Mammary epithelial cell (primary cell): ENCODE measurements at regions of chr1 and their contacts with region 1.

Region 1: GRCh38 chr1:178532392-178532791 is 19.5 kb downstream of the TEX35 start:
- DNase-seq: peak; percentile 58
- H3K4me3 ChIP-seq: no peak overlapping the region
- H3K27ac ChIP-seq: no peak overlapping the region
- H3K4me1 ChIP-seq: peaks cover 31% of the 10 kb centered on the region
- H3K27me3 ChIP-seq: no peaks in the 10 kb centered on the region
- CTCF ChIP-seq: peak; percentile 89 to 92

Region 2: GRCh38 chr1:178300352-178300699 is 232.1 kb before region 1 on chr1:
- CTCF ChIA-PET with region 1: no interaction called
- dilution Hi-C with region 1: no loop called
- in situ Hi-C with region 1: no loop called
- intact Hi-C with region 1: loop called (anchors 1 kb)
- DNase-seq: no peak
- H3K4me3 ChIP-seq: no peak overlapping the region
- H3K27ac ChIP-seq: peak overlapping the region; percentile 47
- H3K4me1 ChIP-seq: peaks cover 10% of the 10 kb centered on the region
- H3K27me3 ChIP-seq: no peaks in the 10 kb centered on the region
- CTCF ChIP-seq: no peak

Region 3: DNA sequence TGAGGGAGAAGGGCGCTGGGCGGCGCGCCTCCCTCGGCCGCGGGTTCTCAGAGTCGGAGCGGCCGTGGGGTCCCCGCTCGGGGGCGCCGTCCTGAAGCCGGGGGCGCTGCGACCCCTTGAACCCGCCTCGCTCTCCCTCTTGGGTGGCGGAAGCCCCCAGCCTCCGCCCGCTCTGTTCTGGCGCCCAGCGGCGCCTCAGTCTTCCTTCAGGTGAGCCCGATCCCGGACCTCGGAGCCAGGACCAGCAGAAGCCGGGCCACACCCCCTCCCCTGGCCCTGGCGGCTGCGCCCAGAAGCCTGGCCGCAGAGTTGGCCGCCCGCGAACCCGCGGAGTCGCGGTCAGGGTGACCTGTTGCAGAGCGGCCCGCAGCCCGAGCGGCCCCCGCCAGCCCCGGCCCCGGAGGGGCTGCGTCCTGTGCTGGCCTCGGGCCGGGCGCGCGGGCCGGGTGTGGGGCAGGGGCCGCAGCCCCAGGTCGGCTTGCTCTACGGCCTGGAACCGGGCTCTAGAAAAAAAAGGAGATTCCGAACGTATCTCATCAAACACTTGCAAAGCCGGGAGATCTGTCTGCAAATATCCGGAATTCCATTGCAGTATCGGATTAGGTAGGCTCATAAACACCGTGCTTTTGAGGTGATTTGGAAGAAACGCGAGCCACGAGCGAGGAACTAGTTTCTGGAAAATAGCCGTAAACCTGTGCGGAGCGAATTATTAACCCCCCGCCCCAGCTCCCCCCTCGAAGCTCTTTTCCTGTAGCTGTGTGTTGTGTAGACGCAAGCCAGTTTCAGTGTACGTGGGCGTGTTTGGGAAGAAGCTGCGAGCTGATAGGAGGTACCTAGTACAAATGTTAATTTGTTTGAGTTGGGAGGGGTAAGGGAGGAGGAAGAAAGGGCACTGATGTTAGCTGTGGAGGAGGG is 193.5 kb after region 1 on chr1:
- CTCF ChIA-PET with region 1: interaction called, 7 read pairs
- dilution Hi-C with region 1: no loop called
- in situ Hi-C with region 1: no loop called
- intact Hi-C with region 1: loop called (anchors 1 kb)
- DNase-seq: peak; percentile 89
- H3K4me3 ChIP-seq: peak overlapping the region; percentile 55 to 80 (median 57)
- H3K27ac ChIP-seq: peak overlapping the region; percentile 85
- H3K4me1 ChIP-seq: peaks cover 15% of the 10 kb centered on the region
- H3K27me3 ChIP-seq: no peaks in the 10 kb centered on the region
- CTCF ChIP-seq: peak in 1 of 2 donors; percentile 19

Region 4: DNA sequence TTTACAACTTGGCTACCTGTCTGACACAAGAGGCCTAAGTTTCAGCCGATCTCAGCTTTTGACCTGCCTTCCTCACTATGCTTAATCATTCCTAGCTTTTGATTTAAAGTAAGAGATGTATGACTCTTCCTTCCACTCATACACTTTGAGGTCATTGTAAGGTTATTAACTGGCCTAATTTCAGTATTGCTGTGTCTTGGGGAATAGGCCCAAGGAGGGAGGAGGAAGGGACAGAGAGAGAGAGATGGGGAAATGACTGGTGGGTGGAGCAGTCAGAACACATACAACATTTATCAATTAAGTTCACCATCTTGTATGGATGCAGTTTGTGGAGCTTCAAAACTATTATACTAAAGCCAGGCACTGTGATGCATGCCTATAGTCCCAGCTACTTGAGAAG is 465.0 kb after region 1 on chr1:
- CTCF ChIA-PET with region 1: interaction called, 6 read pairs
- dilution Hi-C with region 1: no loop called
- in situ Hi-C with region 1: loop called (anchors 5 to 10 kb)
- intact Hi-C with region 1: loop called (anchors 1 kb)
- DNase-seq: no peak
- H3K4me3 ChIP-seq: no peak overlapping the region
- H3K27ac ChIP-seq: no peak overlapping the region
- H3K4me1 ChIP-seq: no peaks in the 10 kb centered on the region
- H3K27me3 ChIP-seq: no peaks in the 10 kb centered on the region
- CTCF ChIP-seq: no peak

Region 5: GRCh38 chr1:179081687-179082332 is 549.4 kb after region 1 on chr1 and contains the start of gene TOR3A:
- CTCF ChIA-PET with region 1: no interaction called
- dilution Hi-C with region 1: no loop called
- in situ Hi-C with region 1: no loop called
- intact Hi-C with region 1: loop called (anchors 1 kb)
- DNase-seq: peak; percentile 89
- H3K4me3 ChIP-seq: peak within 1 kb of the TSS; percentile 56 to 91 (median 84)
- H3K27ac ChIP-seq: peak within 1 kb of the TSS; percentile 50
- H3K4me1 ChIP-seq: peaks cover 5% of the 10 kb centered on the region
- H3K27me3 ChIP-seq: no peaks in the 10 kb centered on the region
- CTCF ChIP-seq: no peak
- total RNA-seq, gene TOR3A: 33.5 to 38.0 TPM

Region 6: GRCh38 chr1:179229214-179230140 is 697.1 kb after region 1 on chr1 and contains the start of gene ABL2:
- CTCF ChIA-PET with region 1: no interaction called
- dilution Hi-C with region 1: no loop called
- in situ Hi-C with region 1: no loop called
- intact Hi-C with region 1: loop called (anchors 10 kb)
- DNase-seq: no peak
- H3K4me3 ChIP-seq: peak within 1 kb of the TSS; percentile 85 to 95 (median 93)
- H3K27ac ChIP-seq: peak within 1 kb of the TSS; percentile 44
- H3K4me1 ChIP-seq: peaks cover 31% of the 10 kb centered on the region
- H3K27me3 ChIP-seq: peaks cover 2% of the 10 kb centered on the region
- CTCF ChIP-seq: no peak
- total RNA-seq, gene ABL2: 78.2 to 161 TPM